Activated naive CD4-positive, alpha-beta T cell treated with anti-CD3 and anti-CD28 coated beads for 36 hours (primary cell): ENCODE measurements at regions of chr3 and their contacts with region 1.

Region 1: DNA sequence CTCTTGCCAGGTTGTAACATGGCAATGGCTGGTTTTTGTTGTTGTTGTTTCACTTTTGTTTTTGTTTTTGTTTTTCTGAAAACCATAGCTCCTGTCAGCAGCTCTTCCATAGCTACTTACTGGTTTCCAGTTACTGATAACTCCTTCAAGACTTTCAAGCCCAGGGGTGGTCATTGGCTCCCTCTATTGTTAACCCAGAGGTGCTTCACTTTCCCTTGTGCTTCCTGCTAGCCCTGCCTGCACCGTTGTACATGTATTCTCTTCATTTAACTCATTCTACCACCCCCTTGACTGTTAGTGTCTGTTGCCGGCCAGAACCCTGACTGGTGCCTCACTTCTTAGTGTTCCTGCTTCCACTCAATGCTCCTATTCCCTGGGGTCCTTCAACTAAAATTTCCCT is 4.2 kb upstream of the TRAT1 start:
- DNase-seq: peak; percentile 86
- H3K4me3 Mint-ChIP-seq: peak overlapping the region; percentile 48
- H3K27ac Mint-ChIP-seq: peak overlapping the region; percentile 79
- H3K4me1 Mint-ChIP-seq: peaks cover 24% of the 10 kb centered on the region
- H3K27me3 Mint-ChIP-seq: no peaks in the 10 kb centered on the region

Region 2: DNA sequence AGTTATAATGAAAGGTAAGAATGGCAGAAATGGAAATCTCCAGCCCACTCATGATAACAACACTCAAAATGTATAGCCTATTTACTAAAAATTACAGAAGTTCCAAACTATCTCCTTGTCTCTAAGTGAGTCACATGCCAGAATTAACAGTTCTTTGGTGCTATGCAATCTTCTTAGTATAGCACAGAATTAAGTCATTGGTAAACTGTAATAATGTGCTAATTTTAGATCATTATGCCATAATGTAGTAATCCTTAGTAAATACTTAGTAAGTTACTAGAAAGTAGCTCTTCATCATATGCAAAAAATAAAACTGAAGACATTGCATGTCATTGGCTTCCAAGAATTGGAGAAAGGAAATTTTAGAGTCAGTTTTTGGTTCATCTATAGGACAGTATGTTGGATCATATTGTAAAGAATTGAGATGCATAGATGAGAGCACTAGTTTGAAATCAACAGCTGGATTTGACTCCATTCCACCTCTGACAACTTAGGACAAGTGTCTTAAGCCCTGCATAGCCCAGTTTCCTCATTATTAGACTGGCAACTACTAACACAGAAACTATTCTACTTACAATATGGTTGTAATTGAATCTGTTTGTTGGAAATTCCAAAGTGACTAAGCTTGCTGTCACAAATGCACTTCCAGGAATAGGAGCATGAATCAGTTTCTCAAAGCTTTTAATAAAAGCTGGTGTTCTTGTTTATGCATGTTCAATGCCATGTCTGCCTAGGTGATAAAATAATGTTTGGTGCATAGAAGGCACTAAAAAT is 687.5 kb before region 1 on chr3:
- CTCF ChIA-PET with region 1: no interaction called
- intact Hi-C with region 1: loop called (anchors 2 kb)
- DNase-seq: no peak
- H3K4me3 Mint-ChIP-seq: peak overlapping the region; percentile 16
- H3K27ac Mint-ChIP-seq: peak overlapping the region; percentile 76
- H3K4me1 Mint-ChIP-seq: peaks cover 85% of the 10 kb centered on the region
- H3K27me3 Mint-ChIP-seq: no peaks in the 10 kb centered on the region

Region 3: GRCh38 chr3:108489771-108490170 is 328.6 kb before region 1 on chr3:
- CTCF ChIA-PET with region 1: interaction called, 3 read pairs
- intact Hi-C with region 1: loop called (anchors 1 kb)
- DNase-seq: peak; percentile 53
- H3K4me3 Mint-ChIP-seq: no peak overlapping the region
- H3K27ac Mint-ChIP-seq: no peak overlapping the region
- H3K4me1 Mint-ChIP-seq: peaks cover 2% of the 10 kb centered on the region
- H3K27me3 Mint-ChIP-seq: no peaks in the 10 kb centered on the region

Region 4: DNA sequence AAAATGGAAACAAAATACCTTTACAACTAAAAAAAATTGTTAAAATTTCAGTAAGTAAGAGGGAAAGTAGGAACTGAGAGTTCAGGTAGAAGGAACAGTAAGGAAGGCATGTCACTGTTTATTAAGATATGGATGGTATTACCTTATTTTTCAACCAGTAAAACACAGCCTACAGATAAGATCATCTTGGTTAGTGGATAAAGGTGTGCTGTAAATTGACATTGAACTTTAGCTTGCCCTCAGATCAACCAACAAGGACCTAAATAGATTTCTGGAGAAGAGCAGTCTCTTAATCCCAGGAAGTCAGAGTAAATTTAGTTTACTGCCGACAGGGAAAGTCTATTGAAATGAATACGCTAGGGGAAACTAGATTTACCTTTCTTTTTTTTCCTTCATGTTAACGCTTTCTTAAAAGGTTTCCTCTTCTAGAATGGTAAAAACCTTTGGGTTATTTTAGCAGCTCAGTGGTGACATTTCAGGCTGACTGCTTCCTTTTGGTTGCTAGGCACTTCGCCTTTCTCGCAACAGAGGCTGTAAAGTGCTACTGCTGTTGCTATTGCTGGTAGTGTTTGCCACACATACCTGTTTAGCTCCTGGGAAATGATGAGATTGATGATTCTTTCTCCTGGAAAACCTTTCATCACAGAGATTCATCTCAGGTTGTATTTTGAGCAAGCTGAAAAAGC is 216.0 kb before region 1 on chr3:
- CTCF ChIA-PET with region 1: no interaction called
- intact Hi-C with region 1: loop called (anchors 2 kb)
- DNase-seq: peak; percentile 72
- H3K4me3 Mint-ChIP-seq: peak overlapping the region; percentile 26
- H3K27ac Mint-ChIP-seq: peak overlapping the region; percentile 62
- H3K4me1 Mint-ChIP-seq: peaks cover 52% of the 10 kb centered on the region
- H3K27me3 Mint-ChIP-seq: no peaks in the 10 kb centered on the region

Region 5: DNA sequence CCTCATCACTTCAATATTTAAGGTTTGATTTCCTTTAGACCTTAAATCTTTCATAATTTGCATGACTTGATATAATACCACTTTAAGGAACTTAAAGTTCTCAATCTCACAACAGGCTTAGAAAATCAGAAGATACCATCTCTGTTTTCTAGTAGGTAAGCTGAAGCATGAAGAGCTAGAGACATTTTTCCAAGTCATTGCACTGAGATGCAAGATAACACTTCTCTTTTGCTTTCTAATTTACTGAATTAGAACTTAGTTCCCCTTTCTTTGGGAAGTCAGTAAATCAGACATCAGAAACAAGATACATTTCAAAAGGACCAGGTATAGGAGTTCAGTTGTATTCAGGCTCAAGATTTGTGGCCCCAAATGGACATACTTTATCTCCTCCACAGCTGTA is 149.2 kb before region 1 on chr3:
- CTCF ChIA-PET with region 1: interaction called, 71 read pairs
- intact Hi-C with region 1: no loop called
- DNase-seq: no peak
- H3K4me3 Mint-ChIP-seq: no peak overlapping the region
- H3K27ac Mint-ChIP-seq: no peak overlapping the region
- H3K4me1 Mint-ChIP-seq: peaks cover 24% of the 10 kb centered on the region
- H3K27me3 Mint-ChIP-seq: no peaks in the 10 kb centered on the region

Region 6: DNA sequence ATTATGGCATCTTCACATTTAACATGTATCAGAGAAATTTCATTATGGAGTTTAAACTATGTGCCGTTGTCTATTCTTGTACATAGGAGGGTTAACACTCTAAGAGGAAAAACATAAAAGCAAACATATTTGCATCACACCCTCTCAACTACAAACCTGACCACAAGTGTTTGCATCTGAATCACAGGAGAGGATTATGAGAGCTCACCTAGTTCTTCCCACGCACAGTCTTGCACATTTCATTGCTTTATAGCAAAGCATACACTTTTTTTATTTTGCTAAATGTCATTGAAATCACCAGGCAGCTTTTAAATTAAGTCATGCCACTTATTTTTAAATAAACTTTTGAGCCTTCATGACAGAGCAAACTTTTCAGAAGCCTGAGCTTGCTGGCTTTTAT is 16.7 kb after region 1 on chr3:
- CTCF ChIA-PET with region 1: interaction called, 52 read pairs
- intact Hi-C with region 1: loop called (anchors 2 kb)
- DNase-seq: peak; percentile 66
- H3K4me3 Mint-ChIP-seq: peak overlapping the region; percentile 81
- H3K27ac Mint-ChIP-seq: peak overlapping the region; percentile 93
- H3K4me1 Mint-ChIP-seq: peaks cover 77% of the 10 kb centered on the region
- H3K27me3 Mint-ChIP-seq: no peaks in the 10 kb centered on the region

Region 7: DNA sequence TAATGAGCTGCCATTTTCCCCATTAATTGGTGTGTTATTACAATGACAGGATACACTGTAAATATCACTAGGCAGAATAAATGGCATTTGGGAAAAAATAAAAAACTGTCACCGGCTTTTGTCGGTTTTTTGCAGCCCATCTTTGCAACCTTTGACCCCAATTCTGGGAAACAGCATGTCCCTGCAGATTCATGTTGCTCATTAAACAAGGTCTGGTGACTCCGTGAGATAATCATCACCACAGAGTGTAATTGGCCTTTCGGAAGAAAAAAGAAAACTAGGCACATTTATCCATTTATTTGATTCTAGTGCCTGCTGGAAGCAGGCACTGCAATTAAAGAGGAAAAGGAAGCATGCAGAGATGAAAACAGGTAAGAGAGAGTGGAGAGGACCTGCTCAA is 68.7 kb after region 1 on chr3:
- CTCF ChIA-PET with region 1: no interaction called
- intact Hi-C with region 1: no loop called
- DNase-seq: no peak
- H3K4me3 Mint-ChIP-seq: no peak overlapping the region
- H3K27ac Mint-ChIP-seq: no peak overlapping the region
- H3K4me1 Mint-ChIP-seq: peaks cover 6% of the 10 kb centered on the region
- H3K27me3 Mint-ChIP-seq: no peaks in the 10 kb centered on the region

Region 8: GRCh38 chr3:108914774-108915641 is 96.6 kb after region 1 on chr3:
- CTCF ChIA-PET with region 1: interaction called, 71 read pairs
- intact Hi-C with region 1: loop called (anchors 1 kb)
- DNase-seq: peak; percentile 81
- H3K4me3 Mint-ChIP-seq: peak overlapping the region; percentile 29
- H3K27ac Mint-ChIP-seq: peak overlapping the region; percentile 1
- H3K4me1 Mint-ChIP-seq: peaks cover 12% of the 10 kb centered on the region
- H3K27me3 Mint-ChIP-seq: no peaks in the 10 kb centered on the region